Posterior vena cava (tissue), 2 donors: ENCODE measurements at regions of chr5 and their contacts with region 1.

Region 1: GRCh38 chr5:159907689-159908590 is 8.3 kb upstream of the ADRA1B start:
- DNase-seq: no peak

Region 2: GRCh38 chr5:159878988-159879471 is 28.9 kb before region 1 on chr5:
- intact Hi-C with region 1: loop called in 1 of 2 experiments (anchors 1 kb)
- DNase-seq: peak; percentile 88

Region 3: DNA sequence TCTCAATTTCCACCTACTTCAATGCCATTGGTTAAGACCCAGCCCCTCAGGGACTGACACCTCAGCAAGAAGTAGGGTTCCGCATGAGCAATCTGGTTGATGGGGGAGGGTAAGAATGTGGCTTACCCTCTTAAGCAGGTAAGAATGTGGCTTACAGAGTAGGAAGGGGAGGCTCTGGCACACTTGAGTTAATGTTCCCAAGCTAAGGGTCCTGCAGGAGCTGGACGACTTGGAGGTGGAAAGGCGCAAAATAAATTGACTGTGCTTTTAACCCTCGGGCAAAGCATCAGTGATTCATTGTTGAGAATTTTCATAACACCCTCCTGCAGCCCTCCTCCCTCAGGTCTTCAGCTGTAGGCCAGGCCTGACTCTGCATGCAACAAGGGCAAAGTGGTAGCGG is 16.6 kb before region 1 on chr5:
- intact Hi-C with region 1: no loop called
- DNase-seq: no peak